ENCODE measurements at regions of chr1 and their contacts with region 1.

Region 1: DNA sequence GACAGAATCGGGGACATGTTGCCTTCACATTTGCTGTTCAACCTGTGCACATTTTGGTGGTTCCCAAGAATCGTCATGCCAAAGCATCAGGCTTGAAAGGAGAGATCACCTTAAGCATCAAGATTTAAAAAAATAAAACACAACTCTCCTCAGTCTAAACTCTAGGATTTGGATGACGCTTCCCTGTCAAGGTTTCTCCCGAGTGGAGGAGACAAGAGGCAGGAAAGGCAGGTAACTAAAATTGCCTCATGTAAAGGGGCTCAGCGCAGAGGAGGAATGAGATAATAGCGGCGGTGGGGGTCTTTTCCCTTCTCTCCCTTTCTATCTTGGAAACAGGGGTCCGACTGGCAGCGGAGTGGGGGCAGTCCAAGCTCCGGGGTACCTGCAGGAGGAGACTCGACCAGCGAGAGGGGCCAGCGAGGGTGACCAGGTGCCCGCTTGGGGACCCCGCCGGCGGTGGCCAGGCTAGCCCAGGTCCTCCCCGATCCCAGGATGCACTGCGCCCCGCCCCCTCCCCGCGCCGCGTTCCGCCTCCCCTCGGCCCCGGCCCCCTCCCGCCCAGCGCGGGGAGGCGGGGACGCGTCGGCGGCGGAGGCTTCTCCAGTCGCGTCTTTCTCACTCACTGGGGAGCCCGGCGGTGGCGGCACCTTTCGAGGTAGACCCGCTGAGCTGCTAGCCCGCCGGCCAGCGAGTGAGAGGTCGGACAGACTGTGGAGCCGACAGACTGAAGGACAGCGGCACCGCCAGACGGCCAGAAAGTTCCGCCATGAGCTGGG is at the start of gene FNBP1L:
- DNase-seq: peak; percentile 58 to 96
- H3K4me3 ChIP-seq: peak within 1 kb of the TSS; percentile 72
- CTCF ChIP-seq: no peak
- POLR2A ChIP-seq: no peak
- total RNA-seq, gene FNBP1L: 19.4 to 30.4 (median 21.9) TPM

Region 2: DNA sequence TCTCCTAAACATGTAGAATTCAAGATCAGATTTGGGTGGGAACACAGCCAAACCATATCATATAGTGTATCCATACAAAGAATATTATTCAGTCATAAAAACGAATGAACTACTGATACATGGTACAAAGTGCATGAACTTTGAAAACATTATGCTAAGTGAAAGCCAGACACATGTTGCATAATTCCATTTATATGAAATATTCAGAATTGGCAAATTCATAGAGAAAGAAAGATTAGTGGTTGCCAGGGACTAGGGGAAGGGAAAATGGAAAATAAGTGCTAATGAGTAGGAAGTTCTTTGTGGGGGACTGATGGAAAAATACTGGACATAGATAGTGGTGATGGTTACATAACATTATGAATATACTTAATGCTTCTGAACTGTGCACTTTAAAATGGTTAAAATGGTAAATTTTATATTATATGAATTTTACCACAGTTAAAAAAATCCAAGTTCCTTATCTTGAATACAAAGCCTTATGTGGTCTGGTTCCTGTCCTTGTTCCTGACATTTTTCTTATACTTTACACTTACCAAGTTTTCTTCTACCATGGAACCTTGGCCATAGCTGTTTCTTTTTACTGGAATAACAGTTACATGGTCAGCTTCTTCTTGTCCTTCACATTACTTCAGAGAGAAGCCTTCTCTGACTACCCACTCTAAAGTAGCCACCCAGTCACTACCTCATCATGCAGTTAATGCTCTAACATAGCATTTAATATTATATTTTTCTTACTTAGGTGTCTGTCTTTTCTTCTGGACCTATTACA is 203.2 kb before region 1 on chr1:
- intact Hi-C with region 1: no loop called
- DNase-seq: no peak
- H3K4me3 ChIP-seq: no peak overlapping the region
- CTCF ChIP-seq: no peak
- POLR2A ChIP-seq: no peak

Region 3: DNA sequence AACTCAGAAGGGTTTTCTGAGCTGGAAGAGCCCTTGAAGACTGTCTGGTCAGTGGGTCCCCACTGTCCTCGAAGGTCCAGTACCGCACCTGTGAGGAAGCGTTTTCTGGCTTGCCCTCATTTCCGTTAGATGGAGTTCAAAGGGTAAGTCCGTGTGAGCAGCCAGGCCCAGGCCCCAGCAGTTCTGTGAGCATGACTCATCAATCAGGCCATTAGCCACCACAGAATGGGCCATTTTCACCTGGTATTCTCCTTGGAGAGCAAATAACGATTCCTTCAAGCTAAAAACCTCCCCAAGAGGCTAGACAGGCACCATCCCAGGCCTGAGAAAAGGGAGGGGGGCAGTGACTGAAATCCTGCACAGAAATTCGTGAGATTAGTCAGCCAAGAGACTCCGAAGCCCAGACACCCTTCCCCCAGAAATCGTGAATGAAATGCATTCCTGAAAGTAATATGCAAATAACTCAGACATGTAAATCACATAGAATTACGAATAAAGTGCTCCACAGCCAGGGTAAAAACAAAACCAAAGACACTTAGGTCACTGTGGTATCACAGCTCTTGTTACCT is 168.0 kb after region 1 on chr1:
- intact Hi-C with region 1: loop called (anchors 10 kb)
- DNase-seq: no peak
- H3K4me3 ChIP-seq: no peak overlapping the region
- CTCF ChIP-seq: no peak
- POLR2A ChIP-seq: no peak

Region 4: GRCh38 chr1:93846211-93846991 is 398.7 kb after region 1 on chr1:
- intact Hi-C with region 1: loop called (anchors 10 kb)
- DNase-seq: peak; percentile 85 to 98
- H3K4me3 ChIP-seq: peak overlapping the region; percentile 78
- CTCF ChIP-seq: no peak
- POLR2A ChIP-seq: no peak

Measured in lower leg skin (tissue), 4 donors.